ENCODE measurements at regions of chr22 and their contacts with region 1.

Region 1: GRCh38 chr22:35023692-35024363 is 42.1 kb upstream of the ISX start:
- DNase-seq: peak; percentile 42
- H3K4me3 Mint-ChIP-seq: no peak overlapping the region
- H3K27ac Mint-ChIP-seq: no peak overlapping the region
- H3K4me1 Mint-ChIP-seq: peaks cover 1% of the 10 kb centered on the region
- H3K27me3 Mint-ChIP-seq: peaks cover 2% of the 10 kb centered on the region

Region 2: DNA sequence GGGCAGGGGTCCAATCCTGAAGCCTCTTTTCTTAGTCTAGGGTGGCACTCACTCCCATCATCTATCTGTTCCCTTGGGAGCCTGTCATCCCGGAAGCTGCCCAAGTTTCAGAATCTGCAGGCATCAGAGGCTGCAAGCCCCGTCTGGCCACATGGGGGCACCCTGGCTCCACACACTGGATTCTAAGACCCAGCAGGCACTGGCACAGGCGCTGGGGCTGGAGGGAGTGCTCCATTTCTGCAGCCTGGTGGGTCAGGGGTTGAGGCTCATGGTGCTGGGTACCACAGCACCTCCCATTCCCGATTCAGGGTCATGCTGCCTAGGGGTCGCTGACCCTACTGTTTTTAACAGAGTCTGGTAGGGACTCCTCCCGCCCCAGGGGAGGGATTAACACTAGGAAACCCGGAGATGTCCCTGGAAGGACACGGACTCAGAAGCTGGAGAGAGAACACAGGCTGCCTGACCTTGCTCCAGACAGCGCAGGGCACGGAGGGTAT is 1721.7 kb before region 1 on chr22:
- intact Hi-C with region 1: loop called (anchors 10 kb)
- DNase-seq: peak; percentile 34
- H3K4me3 Mint-ChIP-seq: no peak overlapping the region
- H3K27ac Mint-ChIP-seq: no peak overlapping the region
- H3K4me1 Mint-ChIP-seq: no peaks in the 10 kb centered on the region
- H3K27me3 Mint-ChIP-seq: no peaks in the 10 kb centered on the region

Region 3: DNA sequence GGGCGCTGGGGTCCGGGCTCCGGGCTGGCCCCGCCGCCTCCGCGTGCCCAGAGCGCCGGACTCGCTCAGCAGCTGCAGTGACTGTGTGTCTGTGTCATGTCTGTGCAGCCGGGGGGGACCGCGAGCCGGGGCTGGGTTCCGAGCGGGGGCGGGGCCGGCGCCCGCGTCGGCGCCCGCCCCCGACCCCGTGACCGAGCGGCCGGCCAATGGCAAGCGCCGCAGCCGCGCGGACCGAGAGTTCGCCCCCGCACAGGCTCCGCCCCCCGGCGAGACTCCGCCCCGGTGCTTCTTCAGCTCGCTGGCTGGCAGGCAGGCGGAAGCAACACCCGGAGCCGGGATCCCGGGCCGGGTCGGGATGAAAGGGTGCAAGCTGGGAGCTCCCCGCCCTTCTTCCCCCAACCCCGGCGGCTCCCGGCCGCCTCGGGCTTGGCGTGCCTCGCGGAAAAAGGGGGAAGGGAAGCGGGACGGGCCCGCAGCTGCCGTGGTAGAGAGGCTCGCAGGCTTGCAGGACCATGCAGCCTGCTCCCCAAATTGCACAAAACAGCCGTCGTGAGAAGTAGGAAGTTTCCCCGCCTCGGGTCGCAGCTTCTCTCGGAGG is 1102.8 kb before region 1 on chr22:
- intact Hi-C with region 1: loop called (anchors 5 kb)
- DNase-seq: peak; percentile 76
- H3K4me3 Mint-ChIP-seq: peak overlapping the region; percentile 60
- H3K27ac Mint-ChIP-seq: no peak overlapping the region
- H3K4me1 Mint-ChIP-seq: peaks cover 5% of the 10 kb centered on the region
- H3K27me3 Mint-ChIP-seq: peaks cover 47% of the 10 kb centered on the region

Region 4: DNA sequence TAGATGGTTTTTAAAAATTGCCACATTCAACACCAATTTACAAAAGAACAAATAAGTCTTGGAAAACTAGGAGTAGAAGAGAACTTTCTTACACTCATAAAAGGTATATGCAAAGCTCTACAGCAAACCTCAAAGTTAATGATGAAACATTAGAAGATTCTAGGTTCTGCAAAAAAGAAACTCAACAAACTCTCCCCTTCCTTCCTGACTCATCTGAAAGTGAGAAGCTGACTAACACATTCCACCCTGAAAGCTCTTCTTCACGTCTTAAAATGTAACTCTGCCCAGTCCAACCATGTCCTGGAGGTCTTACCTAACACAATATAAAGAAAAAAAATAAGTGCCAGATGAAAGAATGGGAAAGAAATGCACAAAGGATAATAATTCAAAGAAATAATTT is 176.8 kb before region 1 on chr22:
- intact Hi-C with region 1: loop called (anchors 10 kb)
- DNase-seq: no peak
- H3K4me3 Mint-ChIP-seq: no peak overlapping the region
- H3K27ac Mint-ChIP-seq: peak overlapping the region; percentile 2
- H3K4me1 Mint-ChIP-seq: peaks cover 2% of the 10 kb centered on the region
- H3K27me3 Mint-ChIP-seq: no peaks in the 10 kb centered on the region

Region 5: GRCh38 chr22:35102663-35103062 is 78.8 kb after region 1 on chr22:
- intact Hi-C with region 1: no loop called
- DNase-seq: no peak
- H3K4me3 Mint-ChIP-seq: no peak overlapping the region
- H3K27ac Mint-ChIP-seq: no peak overlapping the region
- H3K4me1 Mint-ChIP-seq: no peaks in the 10 kb centered on the region
- H3K27me3 Mint-ChIP-seq: peaks cover 5% of the 10 kb centered on the region

Measured in activated T-helper 2 cell treated with anti-CD3 and anti-CD28 coated beads, Interferon-gamma antibody, Interleukin-2, Interleukin-4, amounts not matched to agents 10 μg/mL and 5 μg/mL and 100 μg/mL, durations not matched to agents 14 hours and 24 hours and 36 hours (primary cell).